A673 (cell line): ENCODE measurements at regions of chr21 and their contacts with region 1.

Region 1: DNA sequence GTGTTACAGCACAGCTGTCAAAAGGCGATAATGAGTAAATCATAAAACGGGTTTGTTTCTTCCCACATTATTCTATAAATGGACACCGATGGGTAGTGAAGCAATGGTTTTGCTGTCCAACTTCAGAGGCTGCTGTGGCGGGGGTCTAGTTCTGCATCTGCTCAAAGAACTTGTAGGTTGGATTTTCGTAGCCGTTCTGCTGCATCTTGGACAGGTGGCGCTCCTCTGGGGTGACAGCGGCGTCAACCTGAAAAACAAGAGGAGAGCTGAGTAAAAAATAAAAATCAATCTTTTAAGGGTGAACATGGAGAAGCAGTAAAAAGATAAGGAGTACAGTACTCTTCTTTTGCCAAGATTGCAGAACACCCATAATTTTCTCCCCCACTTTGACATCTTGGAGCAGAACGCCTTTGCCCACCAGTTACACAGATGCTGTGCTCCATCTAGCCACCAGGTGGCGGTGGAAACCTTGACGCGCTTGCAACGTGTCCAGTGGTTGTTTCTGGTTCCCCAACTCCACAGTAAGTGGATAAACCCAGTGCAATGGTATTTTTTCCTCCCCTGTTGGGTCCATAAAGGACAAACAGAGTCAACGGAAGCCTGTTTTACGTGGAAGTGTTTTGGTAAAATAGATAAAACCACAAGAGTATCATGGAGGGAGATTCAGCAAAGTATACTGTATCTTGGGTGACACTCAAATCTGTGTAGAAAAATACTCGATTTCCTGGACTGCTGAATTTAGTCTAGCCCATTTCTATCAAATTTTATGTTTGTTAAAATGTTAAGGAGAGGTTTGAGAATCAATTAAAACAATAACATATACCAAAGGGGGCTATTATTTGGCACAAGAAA is 147.0 kb downstream of the GABPA start:
- DNase-seq: peak; percentile 78
- H3K4me3 ChIP-seq: no peak overlapping the region
- H3K27ac ChIP-seq: peak overlapping the region; percentile 31
- H3K4me1 ChIP-seq: peaks cover 6% of the 10 kb centered on the region
- H3K27me3 ChIP-seq: no peaks in the 10 kb centered on the region
- CTCF ChIP-seq: peak; percentile 96

Region 2: DNA sequence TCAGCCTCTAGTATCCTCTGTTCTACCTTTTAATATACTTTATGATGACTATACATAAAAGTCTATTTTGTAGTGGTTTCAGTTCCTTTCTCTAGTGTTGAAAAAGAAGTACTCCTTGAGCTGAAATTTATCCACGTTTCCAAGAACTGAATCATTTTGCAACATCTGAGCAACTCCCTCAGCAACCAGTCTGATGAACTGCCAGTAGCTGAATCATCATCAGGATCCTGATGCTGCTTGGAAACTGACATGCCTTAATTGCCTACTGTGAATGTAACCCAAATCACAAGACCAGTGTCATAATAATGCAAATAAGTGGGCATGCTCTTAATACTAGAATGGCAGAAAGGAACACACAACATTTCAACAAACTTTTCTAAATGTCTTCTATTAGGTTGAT is 588.0 kb after region 1 on chr21:
- CTCF ChIA-PET with region 1: no interaction called
- POLR2A ChIA-PET with region 1: no interaction called
- intact Hi-C with region 1: loop called (anchors 10 kb)
- DNase-seq: peak; percentile 48
- H3K4me3 ChIP-seq: no peak overlapping the region
- H3K27ac ChIP-seq: no peak overlapping the region
- H3K4me1 ChIP-seq: no peaks in the 10 kb centered on the region
- H3K27me3 ChIP-seq: no peaks in the 10 kb centered on the region
- CTCF ChIP-seq: no peak

Region 3: GRCh38 chr21:26550326-26550725 is 668.6 kb after region 1 on chr21:
- CTCF ChIA-PET with region 1: no interaction called
- POLR2A ChIA-PET with region 1: no interaction called
- intact Hi-C with region 1: loop called (anchors 10 kb)
- DNase-seq: peak; percentile 90
- H3K4me3 ChIP-seq: peak overlapping the region; percentile 15
- H3K27ac ChIP-seq: peak overlapping the region; percentile 83
- H3K4me1 ChIP-seq: peaks cover 57% of the 10 kb centered on the region
- H3K27me3 ChIP-seq: no peaks in the 10 kb centered on the region
- CTCF ChIP-seq: no peak